HepG2 (cell line): ENCODE measurements at regions of chr13 and their contacts with region 1.

Region 1: DNA sequence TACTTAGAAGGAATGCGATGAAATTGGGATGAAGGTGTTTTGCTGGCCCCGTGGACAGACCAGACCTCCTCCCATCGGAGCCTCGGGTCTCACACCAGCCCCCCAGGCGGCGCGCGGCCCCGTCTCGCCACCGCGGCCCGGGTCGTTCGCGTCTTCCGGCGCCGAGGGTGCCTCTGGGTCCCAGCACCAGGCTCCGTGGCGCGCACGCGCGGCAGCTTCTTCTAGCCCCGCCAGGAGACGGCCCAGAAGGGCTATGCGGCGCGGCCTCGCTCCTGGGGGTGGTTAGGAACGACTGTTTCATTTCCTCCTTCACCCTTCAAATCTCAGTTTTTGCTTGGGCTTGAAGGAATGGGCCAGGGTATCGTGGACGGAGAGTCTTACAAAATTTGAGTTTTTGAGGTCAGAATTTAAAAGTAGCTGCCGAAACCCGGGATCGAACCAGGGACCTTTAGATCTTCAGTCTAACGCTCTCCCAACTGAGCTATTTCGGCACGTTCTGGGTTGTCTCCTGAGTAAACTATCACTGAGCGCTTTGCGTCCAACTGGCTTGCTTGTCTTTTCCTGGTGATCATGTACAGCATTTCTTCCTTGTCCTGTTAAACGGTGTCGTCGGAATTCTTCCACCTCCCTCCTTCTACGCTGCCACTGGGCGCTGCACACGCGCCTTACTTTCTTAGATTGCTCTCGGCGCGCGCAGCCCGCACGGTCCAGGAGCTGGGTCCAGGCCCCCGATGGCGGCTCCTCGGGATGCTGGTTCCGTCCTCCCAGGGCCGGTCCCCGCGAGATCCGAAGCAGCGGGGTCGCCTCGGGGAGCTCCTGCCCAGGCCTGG is 46.5 kb downstream of the TGDS start:
- DNase-seq: peak; percentile 81
- ATAC-seq: peak; percentile 90
- H3K4me3 ChIP-seq: peak overlapping the region; percentile 72 to 92 (median 83)
- H3K27ac ChIP-seq: peak overlapping the region; percentile 74
- H3K4me1 ChIP-seq: peaks cover 33% of the 10 kb centered on the region
- H3K27me3 ChIP-seq: no peaks in the 10 kb centered on the region
- CTCF ChIP-seq: 0 out of 2 replicates have a peak, but pooled peaks have one; percentile 2
- EP300 ChIP-seq: no peak
- POLR2A ChIP-seq: peak in 1 of 2 experiments; percentile 68; a peak in 2 of 4 replicates
- RAD21 ChIP-seq: no peak; the same call in 1 of the 2 replicates

Region 2: DNA sequence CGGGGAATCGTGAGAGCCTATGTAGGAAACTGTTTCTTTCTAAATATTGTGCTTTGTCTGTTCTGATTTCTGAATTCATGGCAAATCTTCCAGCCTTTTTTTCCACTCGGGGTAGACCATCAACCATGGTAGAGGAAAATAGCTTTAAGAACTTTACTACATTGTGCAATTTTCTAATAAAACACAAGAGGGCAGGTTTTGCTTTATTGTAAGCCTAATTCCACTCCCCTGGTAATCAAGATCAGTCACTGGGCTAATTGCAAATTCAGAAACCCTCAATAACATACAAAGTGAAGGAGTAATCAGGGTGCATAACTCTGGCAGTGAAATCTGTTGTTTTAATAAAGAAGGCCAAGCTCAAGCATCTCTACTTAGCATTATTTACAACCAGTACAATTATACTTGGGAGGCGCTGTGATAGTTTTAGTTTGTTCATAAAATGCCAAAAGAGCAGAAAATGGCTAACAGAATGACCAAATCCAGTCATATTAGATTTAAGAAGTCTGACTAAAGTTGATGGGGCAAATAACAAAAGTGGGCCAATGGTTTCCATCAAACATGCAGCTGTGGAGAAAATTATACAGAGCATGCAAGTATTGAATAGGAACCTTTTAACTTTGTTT is 113.7 kb before region 1 on chr13:
- CTCF ChIA-PET with region 1: no interaction called
- POLR2A ChIA-PET with region 1: no interaction called
- in situ Hi-C with region 1: no loop called
- intact Hi-C with region 1: loop called (anchors 5 kb)
- DNase-seq: peak; percentile 27
- ATAC-seq: peak; percentile 52; the same call in 1 of the 3 replicates
- H3K4me3 ChIP-seq: no peak overlapping the region
- H3K27ac ChIP-seq: no peak overlapping the region
- H3K4me1 ChIP-seq: peaks cover 15% of the 10 kb centered on the region
- H3K27me3 ChIP-seq: peaks cover 0 to 11% of the 10 kb centered on the region in 2 experiments; a peak in 3 of 5 replicates
- CTCF ChIP-seq: peak; percentile 57
- EP300 ChIP-seq: no peak
- POLR2A ChIP-seq: no peak
- RAD21 ChIP-seq: 0 out of 2 replicates have a peak, but pooled peaks have one; percentile 14

Region 3: DNA sequence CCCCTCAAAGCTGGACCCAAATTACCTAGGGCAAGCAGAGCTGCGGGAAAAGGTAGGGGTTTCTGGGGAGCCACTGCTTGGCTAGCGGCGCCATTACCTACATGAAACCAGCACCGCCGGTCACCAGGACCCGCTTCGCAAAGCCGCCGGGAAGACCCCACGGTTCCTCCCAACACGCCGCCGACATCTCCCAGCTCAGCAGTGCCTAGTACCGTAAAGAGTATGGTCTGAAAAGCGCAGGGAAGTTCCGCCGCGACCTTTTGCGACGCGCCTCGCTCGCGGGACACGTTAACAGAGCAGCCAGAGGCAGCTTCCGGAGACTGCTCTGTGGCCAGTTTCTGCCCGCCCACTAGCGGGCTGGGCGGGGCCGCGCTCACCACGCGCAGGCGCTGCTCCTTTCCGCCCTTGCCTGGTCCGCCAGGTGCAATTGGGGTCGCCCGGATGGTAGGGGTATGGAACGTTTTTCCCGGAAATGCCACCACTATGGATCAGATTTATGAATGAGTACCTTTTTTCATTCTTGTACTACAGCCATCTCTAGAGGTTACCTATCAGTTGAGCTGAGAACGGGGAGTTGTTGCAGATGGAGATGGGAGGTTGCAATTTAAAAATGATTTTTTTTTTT is 46.6 kb after region 1 on chr13 and contains the start of gene TGDS:
- CTCF ChIA-PET with region 1: no interaction called
- POLR2A ChIA-PET with region 1: interaction called, 22 read pairs
- in situ Hi-C with region 1: no loop called
- intact Hi-C with region 1: loop called (anchors 1 kb)
- DNase-seq: peak; percentile 87
- ATAC-seq: peak; percentile 97
- H3K4me3 ChIP-seq: peak within 1 kb of the TSS; percentile 59 to 94 (median 92)
- H3K27ac ChIP-seq: peak within 1 kb of the TSS; percentile 80
- H3K4me1 ChIP-seq: peaks cover 64% of the 10 kb centered on the region
- H3K27me3 ChIP-seq: no peaks in the 10 kb centered on the region; a peak in 1 of 5 replicates
- CTCF ChIP-seq: peak; percentile 34; the same call in 1 of the 2 replicates
- EP300 ChIP-seq: 0 out of 4 replicates have a peak, but pooled peaks of 1 of the 2 experiments have one; percentile 24
- POLR2A ChIP-seq: peak; percentile 91 to 94
- RAD21 ChIP-seq: no peak
- total RNA-seq, gene TGDS: 17.9 and 25.0 TPM in 2 replicates